Activated B cell treated with CpG ODN at 0.5 μM for 24 hours (primary cell): ENCODE measurements at regions of chr11 and their contacts with region 1.

Region 1: GRCh38 chr11:65027213-65028067 is at the start of gene SNX15:
- DNase-seq: peak; percentile 72
- ATAC-seq: peak; percentile 90
- H3K4me3 Mint-ChIP-seq: peak within 1 kb of the TSS; percentile 85
- H3K27ac Mint-ChIP-seq: peak within 1 kb of the TSS; percentile 88
- H3K4me1 Mint-ChIP-seq: peaks cover 21% of the 10 kb centered on the region
- H3K27me3 Mint-ChIP-seq: no peaks in the 10 kb centered on the region
- CTCF ChIP-seq: no peak
- total RNA-seq, gene SNX15: 17.3 and 19.3 TPM in 2 replicates

Region 2: DNA sequence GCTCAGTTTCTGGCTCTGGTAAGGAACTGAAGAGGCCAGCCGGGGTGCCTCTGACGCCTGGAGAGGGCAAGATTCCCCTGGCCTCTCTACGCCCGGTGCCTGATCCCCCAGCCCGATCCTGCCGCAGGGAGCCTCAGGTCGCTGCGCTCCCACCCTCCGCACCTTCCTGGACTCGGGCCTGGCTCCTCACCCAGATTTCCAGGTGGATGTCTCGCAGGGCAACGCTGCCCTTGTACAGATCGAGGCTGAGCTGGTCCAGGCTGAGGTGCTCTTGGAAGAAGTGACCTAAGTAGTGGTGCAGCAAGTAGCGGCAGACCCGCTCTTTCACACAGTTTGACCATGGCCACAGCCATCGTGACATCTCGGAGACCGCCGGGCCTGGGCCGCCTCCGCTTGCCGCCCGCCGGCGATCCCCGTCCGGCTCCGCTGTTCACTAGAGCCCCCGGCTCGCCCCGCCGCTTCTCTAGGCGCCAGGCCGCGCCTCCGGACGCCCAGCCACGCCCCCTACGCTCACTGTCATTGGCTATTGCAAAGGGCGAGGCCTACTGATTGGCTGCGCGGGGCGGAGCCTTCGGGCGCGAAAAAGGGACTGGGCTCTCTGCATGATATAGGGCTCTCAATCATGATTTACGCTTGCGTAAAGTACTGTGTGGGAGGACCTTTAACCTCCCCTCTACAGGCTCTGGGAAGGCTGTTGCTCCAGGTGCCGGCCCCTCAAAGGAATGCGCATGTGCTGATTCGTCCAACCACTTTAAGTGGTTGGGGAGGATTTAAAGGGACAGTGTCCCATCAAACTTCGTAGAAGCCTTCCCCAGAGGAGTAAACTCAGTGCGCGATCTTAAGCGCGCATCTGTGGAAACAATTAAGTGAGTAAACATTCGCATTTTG is 110.4 kb before region 1 on chr11 and contains the start of gene ATG2A:
- CTCF ChIA-PET with region 1: no interaction called
- POLR2A ChIA-PET with region 1: no interaction called
- intact Hi-C with region 1: loop called (anchors 1 kb)
- DNase-seq: peak; percentile 97
- ATAC-seq: peak; percentile 98
- H3K4me3 Mint-ChIP-seq: peak within 1 kb of the TSS; percentile 88
- H3K27ac Mint-ChIP-seq: peak within 1 kb of the TSS; percentile 85
- H3K4me1 Mint-ChIP-seq: peaks cover 38% of the 10 kb centered on the region
- H3K27me3 Mint-ChIP-seq: no peaks in the 10 kb centered on the region
- CTCF ChIP-seq: no peak
- total RNA-seq, gene ATG2A: 31.2 and 35.0 TPM in 2 replicates

Region 3: DNA sequence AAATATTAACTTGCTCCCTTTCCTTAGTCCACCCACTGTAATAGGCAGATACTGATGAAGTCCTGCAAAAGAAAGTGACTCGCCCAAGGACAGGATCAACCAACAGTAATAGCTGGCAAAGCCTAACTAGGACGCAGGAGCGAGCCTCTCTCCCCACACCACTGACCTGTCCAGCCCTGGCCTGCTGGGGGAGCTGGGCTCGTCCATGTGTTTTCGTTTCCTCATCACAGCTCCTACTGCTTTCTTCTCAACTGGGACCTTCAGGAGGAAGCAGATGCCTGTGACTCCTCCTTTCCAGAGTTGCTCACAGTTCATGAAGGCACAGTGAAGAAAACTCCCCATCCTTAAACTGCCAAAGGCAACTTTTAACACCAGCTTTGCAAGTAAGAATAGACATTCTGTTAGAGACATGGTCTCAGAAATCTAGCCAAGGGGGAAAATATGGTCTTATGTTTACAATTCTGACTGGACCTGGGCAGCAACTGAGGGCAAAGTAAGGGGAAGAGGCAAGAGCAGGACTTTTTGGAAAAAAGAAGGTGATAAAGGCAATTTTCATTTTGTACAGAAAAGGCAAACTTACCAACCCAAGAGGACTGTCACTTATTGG is 80.1 kb before region 1 on chr11:
- CTCF ChIA-PET with region 1: no interaction called
- POLR2A ChIA-PET with region 1: no interaction called
- intact Hi-C with region 1: no loop called
- DNase-seq: no peak
- ATAC-seq: no peak
- H3K4me3 Mint-ChIP-seq: no peak overlapping the region
- H3K27ac Mint-ChIP-seq: no peak overlapping the region
- H3K4me1 Mint-ChIP-seq: no peaks in the 10 kb centered on the region
- H3K27me3 Mint-ChIP-seq: peaks cover 9% of the 10 kb centered on the region
- CTCF ChIP-seq: no peak

Region 4: DNA sequence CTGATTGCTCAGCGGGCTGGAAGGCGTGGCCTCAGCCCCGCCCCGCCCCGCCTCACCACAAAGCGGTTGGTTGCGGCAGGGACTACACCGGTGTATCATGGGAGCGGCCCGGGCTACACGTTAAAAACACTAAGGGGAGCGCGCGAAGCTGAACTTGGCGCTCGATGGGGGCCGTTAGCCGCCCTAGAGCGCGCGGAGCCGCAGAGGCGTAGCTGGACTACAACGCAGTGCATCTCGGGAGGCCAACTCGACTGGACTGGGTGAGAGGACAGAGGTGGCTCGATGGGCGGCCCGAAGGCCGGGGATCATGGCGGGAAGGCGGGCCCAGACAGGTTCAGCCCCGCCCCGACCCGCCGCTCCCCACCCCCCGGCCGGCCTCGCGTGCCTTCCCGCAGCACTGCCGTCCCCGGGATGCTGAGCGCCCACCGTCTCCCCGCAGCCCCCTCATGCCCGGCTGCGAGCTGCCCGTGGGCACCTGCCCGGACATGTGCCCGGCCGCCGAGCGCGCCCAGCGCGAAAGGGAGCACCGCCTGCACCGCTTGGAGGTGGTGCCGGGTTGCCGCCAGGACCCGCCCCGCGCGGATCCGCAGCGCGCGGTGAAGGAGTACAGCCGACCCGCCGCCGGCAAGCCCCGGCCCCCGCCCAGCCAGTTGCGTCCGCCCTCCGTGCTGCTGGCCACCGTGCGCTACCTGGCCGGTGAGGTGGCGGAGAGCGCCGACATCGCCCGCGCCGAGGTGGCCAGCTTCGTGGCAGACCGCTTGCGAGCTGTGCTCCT is 13.6 kb after region 1 on chr11 and contains the start of gene SAC3D1:
- CTCF ChIA-PET with region 1: no interaction called
- POLR2A ChIA-PET with region 1: interaction called, 7 read pairs
- intact Hi-C with region 1: loop called (anchors 1 kb)
- DNase-seq: peak; percentile 89
- ATAC-seq: peak; percentile 93
- H3K4me3 Mint-ChIP-seq: peak within 1 kb of the TSS; percentile 93
- H3K27ac Mint-ChIP-seq: peak within 1 kb of the TSS; percentile 95
- H3K4me1 Mint-ChIP-seq: peaks cover 11% of the 10 kb centered on the region
- H3K27me3 Mint-ChIP-seq: no peaks in the 10 kb centered on the region
- CTCF ChIP-seq: no peak
- total RNA-seq, gene SAC3D1: 3.8 and 5.4 TPM in 2 replicates

Region 5: DNA sequence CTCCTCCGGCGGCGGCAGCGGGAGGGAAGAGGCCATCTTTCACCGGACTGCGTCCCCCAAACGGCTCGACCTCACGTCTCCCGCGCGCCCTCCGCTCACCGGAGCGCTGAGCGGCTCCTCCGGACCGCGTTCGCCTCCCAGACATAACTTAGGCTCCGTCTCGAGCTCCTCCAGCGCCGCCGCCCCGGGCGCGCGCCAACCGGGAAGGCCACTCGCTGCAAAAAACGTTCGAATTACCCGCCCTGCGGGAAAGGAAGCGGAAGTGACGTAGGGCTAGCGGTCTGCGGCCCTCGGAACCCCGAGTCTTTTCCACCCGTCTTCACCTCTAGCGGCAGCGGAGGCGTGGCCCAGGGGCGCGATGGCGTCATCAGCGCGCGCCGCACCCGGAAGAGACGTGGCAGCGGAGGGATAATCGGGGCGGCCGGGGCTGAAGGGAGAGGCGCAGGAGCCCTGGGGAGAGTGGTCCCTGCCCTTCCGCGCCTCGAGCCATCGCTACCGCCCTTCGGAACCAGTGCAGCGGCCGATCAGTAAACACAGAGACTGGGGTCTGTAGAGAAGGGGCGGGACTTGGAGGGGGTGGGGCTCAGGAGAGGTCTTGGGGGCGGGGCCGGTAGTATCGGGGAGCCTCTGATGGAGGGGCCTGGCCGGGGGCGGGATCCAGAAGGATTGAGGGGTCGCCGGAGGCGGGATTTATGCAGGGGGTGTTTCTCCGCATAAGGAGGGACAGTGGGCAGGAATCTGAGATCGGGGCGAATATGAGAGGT is 56.6 kb after region 1 on chr11 and contains the starts of genes CDCA5 and ZFPL1:
- CTCF ChIA-PET with region 1: no interaction called
- POLR2A ChIA-PET with region 1: interaction called, 4 read pairs
- intact Hi-C with region 1: loop called (anchors 1 kb)
- DNase-seq: peak; percentile 97
- ATAC-seq: peak; percentile 92
- H3K4me3 Mint-ChIP-seq: peak within 1 kb of the TSS; percentile 93
- H3K27ac Mint-ChIP-seq: peak within 1 kb of the TSS; percentile 94
- H3K4me1 Mint-ChIP-seq: peaks cover 25% of the 10 kb centered on the region
- H3K27me3 Mint-ChIP-seq: no peaks in the 10 kb centered on the region
- CTCF ChIP-seq: no peak
- total RNA-seq, gene CDCA5: 2.6 and 3.4 TPM in 2 replicates
- total RNA-seq, gene ZFPL1: 35.7 and 36.6 TPM in 2 replicates

Region 6: GRCh38 chr11:65180877-65181568 is 153.6 kb after region 1 on chr11:
- CTCF ChIA-PET with region 1: no interaction called
- POLR2A ChIA-PET with region 1: no interaction called
- intact Hi-C with region 1: loop called (anchors 1 kb)
- DNase-seq: peak; percentile 77
- ATAC-seq: peak; percentile 82
- H3K4me3 Mint-ChIP-seq: peak overlapping the region; percentile 92
- H3K27ac Mint-ChIP-seq: peak overlapping the region; percentile 92
- H3K4me1 Mint-ChIP-seq: peaks cover 21% of the 10 kb centered on the region
- H3K27me3 Mint-ChIP-seq: no peaks in the 10 kb centered on the region
- CTCF ChIP-seq: no peak